HEK293 (cell line): ENCODE measurements at regions of chr1 and their contacts with region 1.

Region 1: DNA sequence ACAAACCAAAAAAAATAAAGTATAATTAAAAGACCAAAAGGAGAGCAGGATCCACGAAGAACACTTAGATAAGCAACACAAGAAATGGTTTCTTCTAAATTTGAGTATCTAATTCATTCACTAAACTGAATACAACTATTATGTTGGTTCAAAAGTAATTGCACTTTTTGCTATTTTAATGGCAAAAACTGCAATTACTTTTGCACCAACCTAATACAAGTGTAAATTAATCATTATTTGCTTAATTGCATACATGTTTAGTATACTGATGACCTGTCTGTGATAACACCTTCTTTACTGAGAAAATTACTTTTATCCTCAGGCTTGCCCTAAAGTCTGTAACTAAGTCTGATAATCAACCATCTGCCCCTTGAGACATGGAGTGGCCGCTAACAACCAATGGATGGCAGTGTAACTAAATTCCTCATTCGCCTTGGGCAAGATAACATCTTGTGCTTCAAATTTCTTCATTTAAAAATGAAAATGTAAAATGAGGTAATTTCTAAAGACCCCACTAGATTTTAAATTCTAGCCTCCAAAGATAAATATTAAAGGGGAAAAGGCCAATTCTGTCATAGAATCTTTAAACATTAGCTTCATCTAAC is 85.2 kb downstream of the ENAH start:
- H3K4me3 ChIP-seq: no peak overlapping the region
- H3K27ac ChIP-seq: no peak overlapping the region
- H3K4me1 ChIP-seq: peaks cover 15% of the 10 kb centered on the region
- CTCF ChIP-seq: no peak

Region 2: DNA sequence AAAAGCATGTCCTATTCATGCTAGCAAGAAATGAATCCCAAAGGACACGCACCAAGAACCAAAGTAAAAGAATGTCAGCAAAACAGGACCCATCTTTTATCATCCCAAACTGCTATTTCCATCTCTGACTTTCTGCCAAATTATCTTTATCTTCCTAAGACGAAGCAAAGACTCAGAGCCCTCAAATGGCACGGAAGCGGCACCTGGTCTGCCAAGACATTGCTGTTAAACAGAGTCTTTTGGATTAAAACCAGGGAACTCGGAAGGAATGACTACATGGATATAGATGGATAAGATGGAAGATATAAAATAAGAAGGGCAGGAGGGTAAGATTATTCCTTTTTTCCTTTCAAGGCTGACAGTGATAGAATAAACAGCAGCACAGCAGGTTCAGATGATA is 79.0 kb before region 1 on chr1:
- CTCF ChIA-PET with region 1: no interaction called
- POLR2A ChIA-PET with region 1: no interaction called
- H3K4me3 ChIP-seq: no peak overlapping the region
- H3K27ac ChIP-seq: no peak overlapping the region
- H3K4me1 ChIP-seq: no peaks in the 10 kb centered on the region
- CTCF ChIP-seq: no peak

Region 3: GRCh38 chr1:225554216-225554812 is 13.4 kb before region 1 on chr1:
- CTCF ChIA-PET with region 1: interaction called, 14 read pairs
- POLR2A ChIA-PET with region 1: no interaction called
- H3K4me3 ChIP-seq: no peak overlapping the region
- H3K27ac ChIP-seq: no peak overlapping the region
- H3K4me1 ChIP-seq: no peaks in the 10 kb centered on the region
- CTCF ChIP-seq: 0 out of 2 replicates have a peak, but pooled peaks have one; percentile 33

Region 4: DNA sequence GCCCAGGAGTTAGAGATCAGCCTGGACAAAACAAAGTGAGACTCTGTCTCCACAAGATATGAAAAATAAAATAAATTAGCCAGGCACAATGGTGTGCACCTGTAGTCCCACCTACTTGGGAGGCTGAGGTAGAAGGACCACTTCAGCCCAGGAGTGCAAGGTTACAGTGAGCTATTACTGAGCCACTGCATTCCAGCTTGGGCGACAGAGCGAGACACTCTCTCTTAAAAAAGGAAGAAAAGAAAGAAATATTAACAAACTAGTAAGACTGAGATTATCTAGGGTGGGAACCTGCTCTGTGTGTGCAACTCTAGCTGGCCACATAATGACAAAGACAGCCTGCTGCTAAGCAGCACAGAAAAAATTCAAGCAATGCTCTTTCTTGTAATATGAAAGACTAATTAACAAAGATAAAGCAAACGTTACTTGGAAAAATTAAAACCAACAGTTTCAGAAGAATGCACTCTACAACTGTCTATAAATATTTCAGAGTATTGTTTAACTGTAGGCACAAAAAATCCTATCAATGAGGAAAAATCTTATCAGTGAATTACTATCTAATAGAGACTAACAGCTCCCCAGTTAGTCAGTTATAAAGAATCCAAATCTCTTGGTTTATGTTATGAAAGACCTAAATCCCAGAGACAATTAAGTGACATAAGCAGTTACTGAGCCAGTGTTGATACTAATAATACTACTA is 10.7 kb after region 1 on chr1:
- CTCF ChIA-PET with region 1: interaction called, 13 read pairs
- POLR2A ChIA-PET with region 1: no interaction called
- H3K4me3 ChIP-seq: no peak overlapping the region
- H3K27ac ChIP-seq: no peak overlapping the region
- H3K4me1 ChIP-seq: peaks cover 25% of the 10 kb centered on the region
- CTCF ChIP-seq: no peak

Region 5: DNA sequence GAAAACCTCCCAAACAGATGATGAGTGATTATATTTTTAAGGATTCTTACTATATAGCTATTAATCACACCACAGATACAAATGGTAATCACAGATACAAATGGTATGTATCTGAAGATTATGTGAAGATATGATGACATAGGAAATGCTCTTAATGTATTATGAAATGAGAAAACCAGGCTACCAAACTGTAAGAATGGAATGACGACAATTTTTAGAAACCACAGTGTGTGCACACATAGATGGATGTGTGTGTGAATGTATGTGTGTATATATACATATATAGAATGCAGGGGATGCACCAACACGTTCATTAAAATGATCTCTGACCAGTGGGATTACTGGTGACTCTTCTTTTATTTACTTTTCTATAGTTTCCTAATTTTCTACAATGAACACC is 106.7 kb after region 1 on chr1:
- CTCF ChIA-PET with region 1: no interaction called
- POLR2A ChIA-PET with region 1: no interaction called
- H3K4me3 ChIP-seq: no peak overlapping the region
- H3K27ac ChIP-seq: no peak overlapping the region
- H3K4me1 ChIP-seq: no peaks in the 10 kb centered on the region
- CTCF ChIP-seq: no peak